ENCODE measurements at regions of chr3 and their contacts with region 1.

Region 1: GRCh38 chr3:129183569-129184395 is at the start of gene CNBP:
- DNase-seq: peak; percentile 90 to 96 (median 94)
- ATAC-seq: peak; percentile 100
- H3K4me3 ChIP-seq: peak within 1 kb of the TSS; percentile 74
- H3K4me3 Mint-ChIP-seq: peak within 1 kb of the TSS; percentile 93 to 99 (median 96)
- H3K27ac ChIP-seq: peak within 1 kb of the TSS; percentile 100
- H3K27ac Mint-ChIP-seq: peak within 1 kb of the TSS; percentile 91 to 99 (median 97)
- H3K4me1 ChIP-seq: peaks cover 18 to 27% of the 10 kb centered on the region in 2 donors
- H3K4me1 Mint-ChIP-seq: peaks cover 32 to 48% (median 42%) of the 10 kb centered on the region in 7 donors
- H3K27me3 ChIP-seq: no peaks in the 10 kb centered on the region
- H3K27me3 Mint-ChIP-seq: no peaks in the 10 kb centered on the region
- total RNA-seq, gene CNBP: 259 to 366 (median 327) TPM

Region 2: GRCh38 chr3:128650096-128651050 is 533.4 kb before region 1 on chr3 and contains the start of gene RPN1:
- CTCF ChIA-PET with region 1: no interaction called
- POLR2A ChIA-PET with region 1: no interaction called
- intact Hi-C with region 1: loop called (anchors 1 to 2 kb)
- DNase-seq: peak; percentile 81 to 98 (median 97)
- ATAC-seq: peak; percentile 98
- H3K4me3 ChIP-seq: peak within 1 kb of the TSS; percentile 94
- H3K4me3 Mint-ChIP-seq: peak within 1 kb of the TSS; percentile 83 to 92 (median 90)
- H3K27ac ChIP-seq: peak within 1 kb of the TSS; percentile 99
- H3K27ac Mint-ChIP-seq: peak within 1 kb of the TSS; percentile 73 to 94 (median 92)
- H3K4me1 ChIP-seq: peaks cover 12 to 17% of the 10 kb centered on the region in 2 donors
- H3K4me1 Mint-ChIP-seq: peaks cover 25 to 43% (median 37%) of the 10 kb centered on the region in 7 donors
- H3K27me3 ChIP-seq: no peaks in the 10 kb centered on the region
- H3K27me3 Mint-ChIP-seq: no peaks in the 10 kb centered on the region
- total RNA-seq, gene RPN1: 76.7 to 203 (median 88.5) TPM

Region 3: DNA sequence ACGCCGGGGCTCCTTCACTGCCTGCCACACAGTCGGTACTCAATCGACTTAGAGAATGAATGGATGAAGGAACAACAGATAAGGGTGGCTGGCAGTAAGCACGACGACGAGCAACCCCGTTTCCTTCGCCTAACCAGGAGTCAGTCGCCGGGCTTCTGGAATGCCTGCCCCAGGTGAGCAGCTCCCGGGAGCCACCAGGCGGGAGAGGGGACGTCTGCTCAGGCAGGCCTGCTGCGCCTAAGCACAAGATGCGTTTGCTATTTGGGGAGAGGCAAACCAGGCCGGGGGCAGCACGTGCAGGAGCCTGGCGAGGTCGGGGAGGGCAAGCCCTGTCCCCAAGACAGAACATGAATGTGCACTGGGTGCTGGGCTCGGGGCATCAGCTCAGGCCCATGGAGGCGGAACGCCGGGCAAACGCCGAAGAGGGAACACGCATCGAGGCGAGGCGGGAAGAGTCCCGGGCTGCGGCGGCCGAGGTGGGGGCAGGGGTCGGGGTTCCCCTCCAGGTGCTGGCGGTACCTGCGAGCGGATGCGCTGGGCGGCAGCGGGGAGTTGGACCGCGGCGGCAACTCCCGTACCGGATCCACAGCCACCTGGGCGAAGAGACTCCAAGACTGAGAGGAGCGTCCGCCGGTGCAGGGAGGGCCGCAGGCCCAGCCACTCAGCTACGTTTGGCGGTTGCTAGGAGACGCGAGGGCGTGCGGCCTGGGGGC is 190.2 kb before region 1 on chr3 and contains the start of gene CFAP92:
- CTCF ChIA-PET with region 1: no interaction called
- POLR2A ChIA-PET with region 1: interaction called, 7 read pairs
- intact Hi-C with region 1: loop called in 1 of 2 experiments (anchors 1 kb)
- DNase-seq: peak; percentile 84 to 90 (median 89)
- ATAC-seq: peak; percentile 99
- H3K4me3 ChIP-seq: peak within 1 kb of the TSS; percentile 57
- H3K4me3 Mint-ChIP-seq: peak within 1 kb of the TSS; percentile 71 to 87 (median 82)
- H3K27ac ChIP-seq: peak within 1 kb of the TSS; percentile 61
- H3K27ac Mint-ChIP-seq: peak within 1 kb of the TSS; percentile 56 to 91 (median 73)
- H3K4me1 ChIP-seq: peaks cover 6 to 28% of the 10 kb centered on the region in 2 donors
- H3K4me1 Mint-ChIP-seq: peaks cover 15 to 45% (median 34%) of the 10 kb centered on the region in 7 donors
- H3K27me3 ChIP-seq: no peaks in the 10 kb centered on the region
- H3K27me3 Mint-ChIP-seq: peaks cover 0 to 3% (median 0%) of the 10 kb centered on the region in 5 donors
- total RNA-seq, gene CFAP92: 0.10 to 1.4 (median 0.46) TPM

Region 4: DNA sequence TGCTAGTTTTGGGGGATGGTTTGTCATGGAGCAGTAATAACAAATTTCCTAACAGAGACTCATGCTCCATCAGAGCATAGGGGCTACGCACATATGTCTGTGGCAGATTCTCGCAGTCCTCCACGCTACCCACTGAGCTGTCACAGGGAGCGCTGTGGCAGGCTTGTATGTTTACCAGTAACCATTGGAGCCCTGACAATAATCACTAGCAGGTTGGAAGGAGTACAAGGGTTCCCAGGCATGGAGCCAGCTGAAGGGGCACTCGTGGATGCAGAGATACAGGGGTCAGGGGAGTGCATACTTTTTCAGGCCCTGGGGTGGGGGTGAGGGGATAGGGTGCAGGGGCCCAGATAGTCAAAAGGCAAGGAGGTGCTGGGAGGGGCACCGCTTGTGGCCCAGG is 131.1 kb before region 1 on chr3:
- CTCF ChIA-PET with region 1: interaction called, 3 read pairs
- POLR2A ChIA-PET with region 1: interaction called, 4 read pairs
- intact Hi-C with region 1: loop called in 1 of 2 experiments (anchors 1 kb)
- DNase-seq: no peak
- ATAC-seq: no peak
- H3K4me3 ChIP-seq: no peak overlapping the region
- H3K4me3 Mint-ChIP-seq: no peak overlapping the region
- H3K27ac ChIP-seq: no peak overlapping the region
- H3K27ac Mint-ChIP-seq: peak overlapping the region in 3 of 9 donors; percentile 38 to 69 (median 38)
- H3K4me1 ChIP-seq: no peaks in the 10 kb centered on the region
- H3K4me1 Mint-ChIP-seq: peaks cover 3 to 20% (median 9%) of the 10 kb centered on the region in 7 donors
- H3K27me3 ChIP-seq: no peaks in the 10 kb centered on the region
- H3K27me3 Mint-ChIP-seq: peaks cover 0 to 14% (median 0%) of the 10 kb centered on the region in 5 donors

Region 5: GRCh38 chr3:129278439-129278970 is 94.7 kb after region 1 on chr3 and contains the start of gene HMCES:
- CTCF ChIA-PET with region 1: no interaction called
- POLR2A ChIA-PET with region 1: interaction called, 5 read pairs
- intact Hi-C with region 1: loop called (anchors 1 kb)
- DNase-seq: peak; percentile 92 to 98 (median 95)
- ATAC-seq: peak; percentile 98
- H3K4me3 ChIP-seq: peak within 1 kb of the TSS; percentile 99
- H3K4me3 Mint-ChIP-seq: peak within 1 kb of the TSS; percentile 95 to 99 (median 98)
- H3K27ac ChIP-seq: peak within 1 kb of the TSS; percentile 99
- H3K27ac Mint-ChIP-seq: peak within 1 kb of the TSS; percentile 89 to 100 (median 98)
- H3K4me1 ChIP-seq: peaks cover 14 to 29% of the 10 kb centered on the region in 2 donors
- H3K4me1 Mint-ChIP-seq: peaks cover 21 to 50% (median 37%) of the 10 kb centered on the region in 7 donors
- H3K27me3 ChIP-seq: no peaks in the 10 kb centered on the region
- H3K27me3 Mint-ChIP-seq: no peaks in the 10 kb centered on the region
- total RNA-seq, gene HMCES: 45.7 to 56.4 (median 52.5) TPM

Measured in naive thymus-derived CD4-positive, alpha-beta T cell (primary cell).